ENCODE measurements at regions of chr12 and their contacts with region 1.

Region 1: GRCh38 chr12:92136965-92137721 is 8.5 kb downstream of the BTG1 start:
- DNase-seq: no peak
- ATAC-seq: no peak

Region 2: GRCh38 chr12:91507754-91508153 is 629.4 kb before region 1 on chr12:
- intact Hi-C with region 1: no loop called
- DNase-seq: no peak
- ATAC-seq: no peak

Region 3: DNA sequence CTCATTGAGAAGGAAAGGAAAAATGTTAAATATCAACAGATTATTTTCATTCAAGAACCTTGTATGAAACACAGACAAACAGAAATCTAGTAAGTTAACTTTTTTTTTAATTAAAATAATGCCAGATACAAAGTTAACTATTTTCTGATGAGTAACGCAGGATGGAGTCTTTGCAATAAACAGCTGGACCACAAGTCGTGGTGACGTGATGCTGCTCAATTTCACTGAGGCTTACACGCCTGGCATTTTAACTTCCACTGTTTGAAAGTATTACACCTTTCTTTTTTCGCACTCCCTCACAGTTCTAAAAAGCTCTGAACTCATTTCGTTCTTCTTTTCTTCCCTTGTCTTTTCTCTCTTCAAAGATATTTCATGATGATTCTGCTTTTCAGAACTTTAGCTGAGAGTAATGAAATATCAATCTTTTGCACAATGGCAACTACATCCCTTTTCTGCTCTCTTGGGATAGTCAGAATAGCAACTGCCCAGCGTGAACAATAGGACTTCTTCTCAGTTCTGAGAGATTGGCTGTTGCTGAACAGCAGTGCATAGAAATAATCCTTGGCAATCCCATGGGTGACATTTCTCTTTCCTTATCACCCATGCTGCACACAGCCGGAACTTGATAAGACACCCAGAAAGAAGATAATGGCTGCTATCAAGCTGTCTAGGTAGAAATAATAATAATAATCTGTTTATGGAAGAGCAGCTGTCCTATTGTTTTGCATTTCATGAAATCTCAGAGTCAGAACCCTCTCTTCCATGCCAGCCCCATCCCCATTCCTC is 151.9 kb before region 1 on chr12:
- intact Hi-C with region 1: loop called (anchors 10 kb)
- DNase-seq: no peak
- ATAC-seq: peak; percentile 43